A549 (cell line): ENCODE measurements at regions of chr3 and their contacts with region 1.

Region 1: GRCh38 chr3:128680602-128681368 is 30.2 kb upstream of the RPN1 start:
- DNase-seq: peak; percentile 91 to 98
- ATAC-seq: peak; percentile 98 to 99
- H3K4me3 ChIP-seq: peak overlapping the region; percentile 54
- H3K27ac ChIP-seq: peak overlapping the region; percentile 97 to 98
- H3K4me1 ChIP-seq: 0 out of 3 replicates have a peak, but pooled peaks cover 5% of the 10 kb centered on the region
- CTCF ChIP-seq: peak; percentile 88
- EP300 ChIP-seq: no peak
- POLR2A ChIP-seq: no peak; the same call in none of the 2 replicates
- RAD21 ChIP-seq: peak; percentile 62 to 78

Region 2: DNA sequence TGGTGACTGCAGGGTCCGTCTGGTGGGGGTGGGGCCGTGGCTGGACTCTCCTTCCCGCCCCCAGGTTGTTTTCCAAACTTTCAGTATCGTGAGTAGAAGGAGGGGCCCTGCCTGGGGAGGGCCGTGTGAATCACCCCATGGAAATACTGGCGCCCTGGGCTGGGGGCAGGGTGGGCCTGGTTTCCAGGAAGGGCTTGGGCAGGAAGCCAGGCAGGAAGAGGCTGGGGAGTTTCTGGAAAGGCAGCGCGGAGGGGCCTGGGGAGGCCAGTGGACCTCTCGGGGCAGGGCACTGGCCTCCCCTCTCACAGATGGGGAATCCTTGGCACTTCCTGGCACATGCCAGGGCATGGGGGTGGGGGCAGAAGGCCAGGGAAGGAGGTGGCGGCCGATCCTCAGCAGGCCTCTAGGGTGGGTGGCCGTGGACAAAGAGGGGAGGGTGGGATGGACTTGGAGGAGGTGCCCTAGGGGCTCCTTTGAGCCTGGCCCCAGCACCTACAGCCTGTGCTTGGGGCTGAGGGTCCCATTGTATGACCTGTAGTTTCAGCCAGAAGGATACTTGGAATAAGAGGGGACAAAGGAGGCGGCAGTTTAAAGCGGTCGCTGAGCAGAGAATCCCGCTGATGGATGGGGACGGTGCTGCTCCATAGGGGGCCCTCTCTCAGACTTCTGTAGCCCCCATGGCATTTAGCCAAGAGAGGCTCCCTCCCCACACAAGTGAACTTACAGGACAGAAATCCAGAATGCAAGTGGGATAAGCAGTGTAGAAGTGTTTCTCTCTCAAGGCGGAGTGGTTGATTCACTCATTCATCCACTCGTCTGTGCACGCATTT is 131.3 kb before region 1 on chr3:
- CTCF ChIA-PET with region 1: no interaction called
- POLR2A ChIA-PET with region 1: no interaction called
- DNase-seq: no peak
- ATAC-seq: no peak
- H3K4me3 ChIP-seq: no peak overlapping the region
- H3K27ac ChIP-seq: no peak overlapping the region
- H3K4me1 ChIP-seq: no peaks in the 10 kb centered on the region
- CTCF ChIP-seq: no peak
- EP300 ChIP-seq: no peak
- POLR2A ChIP-seq: no peak
- RAD21 ChIP-seq: no peak

Region 3: GRCh38 chr3:128665362-128666038 is 15.3 kb before region 1 on chr3:
- CTCF ChIA-PET with region 1: interaction called, 50 read pairs
- POLR2A ChIA-PET with region 1: interaction called, 4 read pairs
- DNase-seq: peak in 1 of 2 experiments; percentile 31
- ATAC-seq: peak; percentile 66 to 78; a peak in 5 of 6 replicates
- H3K4me3 ChIP-seq: no peak overlapping the region
- H3K27ac ChIP-seq: peak overlapping the region; percentile 46 to 53; a peak in 2 of 6 replicates
- H3K4me1 ChIP-seq: peaks cover 9% of the 10 kb centered on the region; the same call in 2 of the 3 replicates
- CTCF ChIP-seq: peak; percentile 36; the same call in 1 of the 3 replicates
- EP300 ChIP-seq: no peak
- POLR2A ChIP-seq: no peak
- RAD21 ChIP-seq: peak; percentile 45 to 52

Region 4: DNA sequence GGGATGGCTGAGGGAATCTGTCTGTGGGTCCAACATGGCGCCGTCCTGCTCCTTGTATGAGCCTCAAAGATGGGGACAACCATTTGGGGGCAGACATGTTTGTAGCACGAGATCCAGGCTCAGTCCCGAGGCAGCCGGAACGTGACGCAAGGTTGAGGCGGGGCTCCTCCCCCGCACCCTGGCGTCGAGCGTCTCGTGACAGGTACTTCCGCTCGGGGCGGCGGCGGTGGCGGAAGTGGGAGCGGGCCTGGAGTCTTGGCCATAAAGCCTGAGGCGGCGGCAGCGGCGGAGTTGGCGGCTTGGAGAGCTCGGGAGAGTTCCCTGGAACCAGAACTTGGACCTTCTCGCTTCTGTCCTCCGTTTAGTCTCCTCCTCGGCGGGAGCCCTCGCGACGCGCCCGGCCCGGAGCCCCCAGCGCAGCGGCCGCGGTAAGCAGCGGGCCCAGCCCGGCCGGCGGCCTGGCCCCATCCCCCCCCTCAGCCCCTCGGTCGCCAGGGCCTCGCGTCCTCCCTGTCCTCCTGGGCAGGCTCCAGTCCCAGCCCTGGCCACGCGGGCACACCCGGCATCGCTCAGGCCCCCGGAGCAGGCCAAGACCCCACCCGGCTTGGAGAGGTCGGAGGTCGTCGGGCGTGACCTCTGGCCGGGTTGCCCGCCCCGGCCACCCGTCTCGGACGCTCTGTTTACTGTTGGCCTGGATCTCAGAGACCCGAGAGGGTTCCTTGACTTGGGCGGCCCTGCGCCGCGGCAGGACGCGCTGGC is 45.3 kb after region 1 on chr3 and contains the start of gene RAB7A:
- CTCF ChIA-PET with region 1: interaction called, 10 read pairs
- POLR2A ChIA-PET with region 1: interaction called, 12 read pairs
- DNase-seq: peak; percentile 90 to 97
- ATAC-seq: peak; percentile 97
- H3K4me3 ChIP-seq: peak within 1 kb of the TSS; percentile 95
- H3K27ac ChIP-seq: peak within 1 kb of the TSS; percentile 94 to 96
- H3K4me1 ChIP-seq: peaks cover 28% of the 10 kb centered on the region
- CTCF ChIP-seq: no peak
- EP300 ChIP-seq: no peak
- POLR2A ChIP-seq: peak; percentile 49; the same call in 1 of the 2 replicates
- RAD21 ChIP-seq: no peak
- polyA plus RNA-seq, gene RAB7A: 160 and 191 TPM in 2 replicates

Region 5: GRCh38 chr3:128760042-128760441 is 79.3 kb after region 1 on chr3:
- CTCF ChIA-PET with region 1: interaction called, 11 read pairs
- POLR2A ChIA-PET with region 1: no interaction called
- DNase-seq: no peak
- ATAC-seq: no peak
- H3K4me3 ChIP-seq: no peak overlapping the region
- H3K27ac ChIP-seq: no peak overlapping the region
- H3K4me1 ChIP-seq: no peaks in the 10 kb centered on the region
- CTCF ChIP-seq: no peak
- EP300 ChIP-seq: no peak
- POLR2A ChIP-seq: no peak
- RAD21 ChIP-seq: no peak

Region 6: DNA sequence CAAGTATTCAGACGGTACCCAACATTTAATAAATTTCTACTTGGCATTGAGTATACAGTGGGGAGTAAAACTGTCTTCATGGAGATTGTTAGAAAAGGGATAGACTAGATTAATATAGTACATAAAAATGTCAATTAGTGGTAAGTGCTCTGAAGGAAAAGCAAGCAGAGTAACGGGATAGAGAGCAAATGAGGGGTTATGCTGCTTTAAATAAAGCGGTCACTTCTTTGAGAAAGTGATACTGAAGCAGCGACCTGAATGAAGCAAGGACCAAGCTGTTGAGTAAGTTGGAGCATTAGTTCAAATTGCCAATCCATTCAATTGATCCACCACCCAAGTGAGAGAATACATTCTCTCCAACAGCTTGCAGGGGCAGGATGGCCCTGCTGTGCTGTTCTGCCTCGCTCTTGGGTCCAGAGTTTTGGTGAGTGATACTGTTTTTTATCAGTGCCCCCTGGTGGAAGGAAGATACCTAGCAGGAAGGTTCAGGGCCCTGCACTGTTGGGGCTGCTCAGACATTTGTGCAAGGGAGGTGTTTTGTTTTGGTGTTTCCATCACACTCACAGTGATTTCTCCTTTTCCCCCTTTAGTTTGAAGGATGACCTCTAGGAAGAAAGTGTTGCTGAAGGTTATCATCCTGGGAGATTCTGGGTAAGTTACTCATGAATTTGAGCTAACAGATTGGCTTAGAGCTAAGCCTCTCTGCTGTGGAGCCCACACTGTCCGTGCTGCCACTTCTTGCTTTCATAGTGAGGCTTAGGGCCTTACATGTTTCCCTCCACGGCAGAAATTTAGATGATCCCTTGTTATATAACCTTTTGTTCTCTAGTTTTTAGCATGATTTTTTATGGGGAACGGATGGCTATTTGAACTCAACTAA is 114.2 kb after region 1 on chr3:
- CTCF ChIA-PET with region 1: interaction called, 57 read pairs
- POLR2A ChIA-PET with region 1: interaction called, 6 read pairs
- DNase-seq: peak; percentile 54 to 69
- ATAC-seq: peak; percentile 98
- H3K4me3 ChIP-seq: no peak overlapping the region
- H3K27ac ChIP-seq: no peak overlapping the region
- H3K4me1 ChIP-seq: peaks cover 11% of the 10 kb centered on the region; the same call in 2 of the 3 replicates
- CTCF ChIP-seq: peak; percentile 63
- EP300 ChIP-seq: no peak
- POLR2A ChIP-seq: no peak
- RAD21 ChIP-seq: peak; percentile 59 to 63

Region 7: DNA sequence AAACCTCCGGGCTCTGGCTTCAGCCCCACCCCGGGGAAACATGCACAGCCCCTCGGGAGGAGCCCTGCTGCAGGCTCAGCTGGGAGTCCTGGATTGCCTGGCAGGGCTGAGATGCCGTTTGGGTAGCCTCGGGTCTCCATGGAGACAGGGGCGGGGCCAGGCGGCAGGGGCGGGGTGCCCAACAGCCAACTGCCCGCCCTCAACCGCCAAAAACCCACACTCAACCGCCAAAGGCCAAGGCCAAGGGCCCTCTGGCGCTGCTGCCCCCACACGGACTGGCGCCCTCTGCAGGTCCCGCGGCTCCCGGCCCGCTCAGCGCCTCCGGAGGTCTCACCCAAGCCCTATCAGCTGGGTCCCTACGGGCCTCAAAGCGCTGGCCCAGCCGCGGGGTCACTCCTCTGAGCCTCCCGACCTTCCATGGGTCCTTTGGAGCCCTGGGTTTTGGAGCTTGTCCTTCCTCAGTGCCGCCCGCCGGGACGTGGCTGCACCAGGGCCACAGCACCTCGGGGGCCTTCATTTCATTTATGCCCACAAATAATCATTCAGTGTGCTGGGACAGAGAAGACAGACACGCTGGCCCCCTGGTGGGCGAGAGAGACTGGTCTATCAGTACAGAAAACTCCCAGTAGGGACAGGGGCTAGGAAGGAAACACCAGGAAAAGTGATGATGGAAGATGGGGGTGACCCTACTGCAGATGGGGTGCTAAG is 165.1 kb after region 1 on chr3:
- CTCF ChIA-PET with region 1: interaction called, 12 read pairs
- POLR2A ChIA-PET with region 1: no interaction called
- DNase-seq: peak; percentile 53 to 62
- ATAC-seq: peak; percentile 85 to 90
- H3K4me3 ChIP-seq: peak overlapping the region; percentile 43
- H3K27ac ChIP-seq: peak overlapping the region; percentile 62 to 88
- H3K4me1 ChIP-seq: 0 out of 3 replicates have a peak, but pooled peaks cover 9% of the 10 kb centered on the region
- CTCF ChIP-seq: peak; percentile 43
- EP300 ChIP-seq: no peak
- POLR2A ChIP-seq: no peak
- RAD21 ChIP-seq: peak; percentile 17 to 32; a peak in 3 of 5 replicates

Region 8: DNA sequence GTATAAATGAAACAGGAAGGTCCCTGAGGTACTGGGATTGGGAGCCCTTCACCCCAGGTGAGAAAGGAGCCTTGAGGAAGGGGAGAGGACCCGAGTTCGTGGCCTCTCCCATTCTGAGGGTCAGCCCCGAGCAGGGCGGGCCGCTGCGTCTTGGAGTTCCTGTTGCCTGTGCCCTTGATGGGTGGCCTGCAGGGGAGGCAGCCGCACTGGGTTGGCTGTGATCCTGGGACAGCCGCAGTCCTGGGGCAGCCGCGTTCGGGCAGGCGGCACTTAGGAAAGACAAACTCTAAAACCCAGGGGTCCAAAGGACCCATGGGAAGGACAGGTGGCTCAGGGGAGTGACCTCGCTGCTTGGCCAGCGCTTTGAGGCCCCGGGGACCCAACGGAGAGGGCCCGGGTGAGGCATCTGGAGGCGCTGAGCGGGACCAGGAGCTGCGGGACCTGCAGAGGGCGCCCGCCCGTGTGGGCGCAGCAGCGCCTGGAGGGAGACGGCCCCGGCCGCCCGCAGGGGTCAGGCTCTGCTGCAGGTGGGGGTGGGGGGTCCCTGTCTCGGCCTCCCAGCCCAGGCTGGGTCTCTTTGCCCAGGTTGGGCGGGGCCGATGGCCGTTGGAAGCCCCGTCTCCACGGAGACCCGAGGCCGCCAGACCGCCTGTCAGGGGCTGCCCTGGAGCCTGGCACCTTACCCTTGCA is 663.0 kb after region 1 on chr3:
- CTCF ChIA-PET with region 1: no interaction called
- POLR2A ChIA-PET with region 1: no interaction called
- DNase-seq: peak; percentile 38 to 44
- ATAC-seq: peak; percentile 93 to 96
- H3K4me3 ChIP-seq: peak overlapping the region; percentile 47
- H3K27ac ChIP-seq: peak overlapping the region; percentile 59 to 87
- H3K4me1 ChIP-seq: peaks cover 6% of the 10 kb centered on the region; the same call in 1 of the 3 replicates
- CTCF ChIP-seq: peak; percentile 58
- EP300 ChIP-seq: no peak
- POLR2A ChIP-seq: no peak
- RAD21 ChIP-seq: peak; percentile 27 to 31; a peak in 2 of 5 replicates